ENCODE measurements at regions of chr5 and their contacts with region 1.

Region 1: DNA sequence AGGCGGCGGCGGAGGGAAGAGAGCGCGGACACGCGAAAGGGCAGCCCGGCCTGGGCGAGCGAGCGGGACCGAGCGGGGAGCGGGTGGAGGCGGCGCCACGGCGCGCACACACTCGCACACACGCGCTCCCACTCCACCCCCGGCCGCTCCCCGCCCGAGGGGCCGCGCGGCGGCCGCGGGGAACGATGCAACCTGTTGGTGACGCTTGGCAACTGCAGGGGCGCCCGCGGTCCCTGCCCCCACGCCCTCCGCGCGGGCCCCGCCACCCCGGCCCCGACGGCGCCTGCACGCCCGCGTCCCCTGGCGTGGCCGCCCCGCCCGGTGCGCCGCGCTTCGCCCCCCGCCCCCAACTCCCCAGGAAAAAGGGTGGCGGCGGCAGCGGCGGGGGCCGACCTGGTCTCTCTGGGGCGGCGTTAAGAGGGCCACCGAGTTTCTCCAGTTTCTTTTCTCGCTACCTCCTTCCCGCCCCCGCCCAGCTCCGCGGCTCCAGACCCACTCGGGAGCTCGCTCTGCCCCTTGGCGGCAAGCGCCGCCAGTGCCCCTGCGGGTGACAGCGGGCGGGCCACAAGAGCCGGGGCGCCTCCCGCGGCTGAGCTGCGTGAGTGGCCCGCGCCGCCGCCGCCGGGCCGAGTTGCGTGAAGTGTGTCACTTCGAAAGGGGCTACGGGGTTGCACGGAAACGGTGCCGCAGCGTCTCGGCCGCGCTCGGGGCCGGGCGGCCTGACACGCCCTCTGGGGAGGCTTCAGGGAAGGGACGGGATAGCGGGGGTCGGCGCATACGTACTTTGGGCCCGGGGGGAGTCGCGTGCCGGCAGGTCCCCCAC is at the start of gene NR3C1:
- DNase-seq: peak; percentile 86
- ATAC-seq: peak; percentile 82
- H3K4me3 ChIP-seq: peak within 1 kb of the TSS; percentile 97
- H3K27ac ChIP-seq: peak within 1 kb of the TSS; percentile 100
- H3K4me1 ChIP-seq: peaks cover 7% of the 10 kb centered on the region
- H3K27me3 ChIP-seq: no peaks in the 10 kb centered on the region
- CTCF ChIP-seq: peak; percentile 68
- POLR2A ChIP-seq: peak; percentile 55
- RAD21 ChIP-seq: peak; percentile 68
- total RNA-seq, gene NR3C1: 62.8 and 77.4 TPM in 2 replicates

Region 2: DNA sequence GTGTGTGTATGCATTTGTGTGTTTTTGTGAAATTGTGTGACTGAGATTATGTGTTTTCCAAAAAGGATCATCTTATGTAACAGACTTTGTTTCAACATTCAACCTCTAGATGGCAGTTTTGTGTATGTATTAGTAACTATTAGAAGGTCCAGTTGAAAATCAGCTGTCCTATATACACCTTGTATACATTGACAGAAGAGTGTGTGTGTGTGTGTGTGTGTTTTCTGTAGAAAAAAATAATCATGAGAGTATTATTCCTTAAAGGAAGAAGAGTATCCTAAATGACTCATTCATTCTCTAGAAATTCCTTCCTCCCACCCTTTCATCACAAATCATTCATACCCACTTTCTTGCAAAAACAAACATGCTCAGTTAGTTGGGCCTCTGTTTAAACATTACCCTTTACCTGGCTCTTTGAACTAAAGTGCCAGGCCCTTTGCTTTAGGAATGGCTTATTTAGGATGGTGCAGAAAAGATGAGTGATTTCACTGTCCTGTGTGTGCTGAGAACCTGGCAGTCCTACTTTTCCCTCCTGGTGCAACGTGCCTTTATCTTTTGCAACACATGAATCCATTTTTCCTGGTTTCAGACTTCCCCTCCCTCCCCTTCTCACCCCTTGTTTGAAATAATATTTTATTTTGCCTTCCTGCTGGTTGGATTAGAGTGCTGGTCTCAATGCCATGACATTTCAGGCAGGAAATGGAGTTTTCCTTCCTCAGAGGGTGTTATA is 481.4 kb before region 1 on chr5:
- CTCF ChIA-PET with region 1: no interaction called
- POLR2A ChIA-PET with region 1: no interaction called
- dilution Hi-C with region 1: no loop called
- in situ Hi-C with region 1: loop called (anchors 10 kb)
- intact Hi-C with region 1: loop called (anchors 1 kb)
- DNase-seq: peak; percentile 77
- ATAC-seq: peak; percentile 64
- H3K4me3 ChIP-seq: no peak overlapping the region
- H3K27ac ChIP-seq: no peak overlapping the region
- H3K4me1 ChIP-seq: peaks cover 7% of the 10 kb centered on the region
- H3K27me3 ChIP-seq: no peaks in the 10 kb centered on the region
- CTCF ChIP-seq: peak; percentile 50
- POLR2A ChIP-seq: no peak
- RAD21 ChIP-seq: peak; percentile 64

Region 3: GRCh38 chr5:142977363-142978051 is 426.3 kb before region 1 on chr5:
- CTCF ChIA-PET with region 1: no interaction called
- POLR2A ChIA-PET with region 1: no interaction called
- dilution Hi-C with region 1: no loop called
- in situ Hi-C with region 1: no loop called
- intact Hi-C with region 1: no loop called
- DNase-seq: peak; percentile 94
- ATAC-seq: peak; percentile 88
- H3K4me3 ChIP-seq: no peak overlapping the region
- H3K27ac ChIP-seq: peak overlapping the region; percentile 59
- H3K4me1 ChIP-seq: peaks cover 24% of the 10 kb centered on the region
- H3K27me3 ChIP-seq: no peaks in the 10 kb centered on the region
- CTCF ChIP-seq: no peak
- POLR2A ChIP-seq: no peak
- RAD21 ChIP-seq: peak; percentile 13; the same call in 1 of the 2 replicates

Region 4: DNA sequence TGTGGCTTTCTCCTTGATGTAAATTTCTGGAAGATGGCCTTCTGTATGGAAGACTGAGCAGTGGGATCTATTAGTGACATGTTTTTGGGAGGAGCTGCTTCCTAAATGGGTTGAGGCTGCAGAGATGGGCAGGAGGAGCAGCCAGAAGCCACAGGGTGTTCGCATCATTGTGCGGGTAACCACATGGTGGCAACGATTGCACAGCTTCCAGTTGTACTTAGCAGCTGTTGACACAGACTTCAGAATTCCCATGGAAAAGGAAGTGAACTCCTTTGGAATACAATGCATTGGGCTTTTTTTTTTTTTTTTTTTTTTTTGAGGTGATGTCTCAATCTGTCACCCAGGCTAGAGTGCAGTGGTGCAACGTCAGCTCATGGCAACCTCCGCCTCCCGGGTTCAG is 297.6 kb before region 1 on chr5:
- CTCF ChIA-PET with region 1: no interaction called
- POLR2A ChIA-PET with region 1: no interaction called
- dilution Hi-C with region 1: no loop called
- in situ Hi-C with region 1: no loop called
- intact Hi-C with region 1: loop called (anchors 1 kb)
- DNase-seq: peak; percentile 77
- ATAC-seq: peak; percentile 78
- H3K4me3 ChIP-seq: no peak overlapping the region
- H3K27ac ChIP-seq: no peak overlapping the region
- H3K4me1 ChIP-seq: peaks cover 2% of the 10 kb centered on the region; the same call in 1 of the 2 replicates
- H3K27me3 ChIP-seq: no peaks in the 10 kb centered on the region
- CTCF ChIP-seq: peak; percentile 46
- POLR2A ChIP-seq: no peak
- RAD21 ChIP-seq: peak; percentile 68

Region 5: GRCh38 chr5:143262393-143263174 is 141.2 kb before region 1 on chr5:
- CTCF ChIA-PET with region 1: no interaction called
- POLR2A ChIA-PET with region 1: no interaction called
- dilution Hi-C with region 1: no loop called
- in situ Hi-C with region 1: no loop called
- intact Hi-C with region 1: loop called (anchors 1 kb)
- DNase-seq: peak; percentile 99
- ATAC-seq: peak; percentile 86
- H3K4me3 ChIP-seq: no peak overlapping the region
- H3K27ac ChIP-seq: no peak overlapping the region
- H3K4me1 ChIP-seq: peaks cover 6% of the 10 kb centered on the region; the same call in 1 of the 2 replicates
- H3K27me3 ChIP-seq: no peaks in the 10 kb centered on the region
- CTCF ChIP-seq: no peak
- POLR2A ChIP-seq: no peak
- RAD21 ChIP-seq: peak; percentile 9; the same call in 1 of the 2 replicates

Region 6: DNA sequence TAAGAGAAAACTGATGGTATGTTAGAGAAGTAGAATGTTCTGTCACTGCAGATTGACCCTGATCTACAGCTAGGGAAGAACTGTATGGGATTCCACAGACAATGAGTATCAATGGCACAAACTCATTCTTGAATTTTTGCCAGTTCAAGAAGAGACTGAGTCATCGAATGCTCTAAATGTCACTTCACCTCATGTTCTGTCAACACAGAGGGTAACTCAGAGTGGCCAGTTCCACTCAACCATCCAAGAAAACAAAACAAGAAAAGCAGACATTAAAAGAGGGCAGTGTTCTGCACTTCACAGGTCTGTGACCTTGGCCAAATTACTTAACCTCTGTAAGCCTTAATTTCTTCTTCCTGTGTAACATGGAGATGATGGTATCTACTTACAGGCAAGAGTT is 276.0 kb after region 1 on chr5:
- CTCF ChIA-PET with region 1: no interaction called
- POLR2A ChIA-PET with region 1: no interaction called
- dilution Hi-C with region 1: no loop called
- in situ Hi-C with region 1: no loop called
- intact Hi-C with region 1: loop called (anchors 1 kb)
- DNase-seq: peak; percentile 56
- ATAC-seq: peak; percentile 53
- H3K4me3 ChIP-seq: no peak overlapping the region
- H3K27ac ChIP-seq: no peak overlapping the region
- H3K4me1 ChIP-seq: peaks cover 8% of the 10 kb centered on the region
- H3K27me3 ChIP-seq: no peaks in the 10 kb centered on the region
- CTCF ChIP-seq: no peak
- POLR2A ChIP-seq: no peak
- RAD21 ChIP-seq: no peak

Region 7: DNA sequence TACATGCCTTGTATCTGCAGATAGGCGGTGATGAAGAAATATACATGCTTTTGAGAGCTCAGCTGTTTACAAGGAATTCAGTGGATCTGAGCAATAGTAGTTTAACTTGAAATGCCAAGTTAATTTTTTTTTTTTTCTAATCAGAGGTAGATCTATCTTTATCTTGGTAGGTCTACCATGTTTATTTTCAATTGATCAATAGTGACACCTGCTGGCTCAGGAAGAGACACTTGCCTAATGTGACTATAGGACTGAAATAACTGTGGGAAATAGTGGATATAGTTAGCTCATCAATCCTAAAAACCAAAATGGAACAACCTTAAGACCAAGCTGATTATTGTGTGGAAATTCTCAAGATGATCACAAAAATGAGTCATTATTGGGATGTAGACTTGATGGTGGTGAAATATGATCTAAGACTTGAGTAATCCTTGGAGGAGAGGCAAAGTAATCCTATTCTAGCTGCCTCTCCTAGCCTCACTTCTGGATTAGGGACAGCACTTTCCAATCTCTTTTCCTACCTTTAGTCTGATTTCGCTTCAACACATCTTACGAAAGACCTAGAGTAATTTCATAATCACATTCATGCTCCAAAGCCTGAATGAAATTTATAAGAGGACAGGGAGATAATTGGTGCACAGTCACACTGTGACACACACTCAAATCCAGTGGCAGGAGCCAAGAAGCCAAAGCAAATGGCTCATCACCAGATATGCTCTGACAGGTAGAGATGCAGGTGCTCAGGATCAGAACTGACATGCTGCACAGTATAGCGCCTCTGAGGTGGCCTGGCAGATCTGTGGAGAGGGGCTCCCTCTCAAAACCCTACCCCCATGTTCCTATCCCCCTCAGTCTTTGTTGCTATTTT is 564.4 kb after region 1 on chr5:
- CTCF ChIA-PET with region 1: no interaction called
- POLR2A ChIA-PET with region 1: no interaction called
- dilution Hi-C with region 1: no loop called
- in situ Hi-C with region 1: no loop called
- intact Hi-C with region 1: loop called (anchors 1 kb)
- DNase-seq: peak; percentile 78
- ATAC-seq: peak; percentile 66
- H3K4me3 ChIP-seq: no peak overlapping the region
- H3K27ac ChIP-seq: no peak overlapping the region
- H3K4me1 ChIP-seq: peaks cover 4% of the 10 kb centered on the region; the same call in 1 of the 2 replicates
- H3K27me3 ChIP-seq: no peaks in the 10 kb centered on the region
- CTCF ChIP-seq: peak; percentile 52
- POLR2A ChIP-seq: no peak
- RAD21 ChIP-seq: peak; percentile 58

Measured in IMR-90 (cell line).